ENCODE measurements at regions of chr16 and their contacts with region 1.

Region 1: GRCh38 chr16:1705688-1706385 is at the start of gene MAPK8IP3:
- DNase-seq: peak; percentile 94 to 97 (median 96)
- ATAC-seq: peak; percentile 84
- H3K4me3 ChIP-seq: peak within 1 kb of the TSS; percentile 74
- H3K27ac ChIP-seq: peak within 1 kb of the TSS; percentile 84
- H3K4me1 ChIP-seq: peaks cover 28 to 46% of the 10 kb centered on the region in 2 experiments
- H3K27me3 ChIP-seq: no peaks in the 10 kb centered on the region
- CTCF ChIP-seq: peak; percentile 74 to 95 (median 93)
- EP300 ChIP-seq: no peak
- POLR2A ChIP-seq: peak; percentile 94
- RAD21 ChIP-seq: no peak
- polyA plus RNA-seq, gene MAPK8IP3: 0.17 to 0.21 TPM

Region 2: GRCh38 chr16:1499756-1500464 is 205.9 kb before region 1 on chr16:
- CTCF ChIA-PET with region 1: no interaction called
- POLR2A ChIA-PET with region 1: no interaction called
- in situ Hi-C with region 1: no loop called
- intact Hi-C with region 1: no loop called
- DNase-seq: no peak
- ATAC-seq: no peak
- H3K4me3 ChIP-seq: no peak overlapping the region
- H3K27ac ChIP-seq: no peak overlapping the region
- H3K4me1 ChIP-seq: peaks cover 0 to 39% of the 10 kb centered on the region in 2 experiments; a peak in 2 of 5 replicates
- H3K27me3 ChIP-seq: no peaks in the 10 kb centered on the region
- CTCF ChIP-seq: no peak
- EP300 ChIP-seq: no peak
- POLR2A ChIP-seq: no peak
- RAD21 ChIP-seq: no peak

Region 3: DNA sequence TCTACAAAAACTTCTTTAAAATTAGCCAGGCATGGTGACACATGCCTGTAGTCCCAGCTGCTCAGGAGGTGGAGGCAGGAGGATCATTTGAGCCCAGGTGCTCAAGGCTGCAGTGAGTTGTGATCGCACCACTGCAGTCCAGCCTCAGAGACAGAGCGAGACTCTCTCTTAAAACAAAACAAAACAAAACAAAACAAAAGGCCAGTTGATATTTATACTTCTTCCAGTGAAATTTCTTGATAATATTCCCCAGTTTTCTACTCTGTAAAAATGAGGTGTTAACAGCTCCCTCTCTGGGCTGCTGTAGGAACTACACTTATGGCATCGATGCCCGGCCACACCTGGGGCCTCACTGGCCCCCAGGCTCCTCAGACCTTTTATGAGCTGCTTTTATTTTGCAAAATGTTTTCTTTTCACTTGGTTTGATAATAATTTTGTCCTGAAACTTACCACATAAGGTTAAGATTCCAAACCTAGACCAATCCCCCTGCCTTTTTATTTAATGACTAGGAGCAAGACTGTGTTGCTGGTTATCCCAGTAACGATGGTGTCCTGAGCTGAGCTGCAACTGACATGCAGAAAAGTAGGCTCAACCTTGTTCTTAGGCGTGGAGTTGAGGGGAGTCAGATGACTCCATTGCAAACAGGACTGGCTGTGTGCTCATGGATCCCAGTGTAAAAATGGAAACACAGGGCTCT is 17.8 kb after region 1 on chr16:
- CTCF ChIA-PET with region 1: no interaction called
- POLR2A ChIA-PET with region 1: interaction called, 11 read pairs
- in situ Hi-C with region 1: no loop called
- intact Hi-C with region 1: no loop called
- DNase-seq: peak; percentile 55 to 69 (median 64)
- ATAC-seq: peak; percentile 89
- H3K4me3 ChIP-seq: no peak overlapping the region
- H3K27ac ChIP-seq: no peak overlapping the region
- H3K4me1 ChIP-seq: peaks cover 9 to 26% of the 10 kb centered on the region in 2 experiments; a peak in 3 of 5 replicates
- H3K27me3 ChIP-seq: no peaks in the 10 kb centered on the region
- CTCF ChIP-seq: peak; percentile 61 to 80 (median 76)
- EP300 ChIP-seq: no peak
- POLR2A ChIP-seq: no peak
- RAD21 ChIP-seq: peak; percentile 23 to 56; a peak in 3 of 4 replicates

Region 4: DNA sequence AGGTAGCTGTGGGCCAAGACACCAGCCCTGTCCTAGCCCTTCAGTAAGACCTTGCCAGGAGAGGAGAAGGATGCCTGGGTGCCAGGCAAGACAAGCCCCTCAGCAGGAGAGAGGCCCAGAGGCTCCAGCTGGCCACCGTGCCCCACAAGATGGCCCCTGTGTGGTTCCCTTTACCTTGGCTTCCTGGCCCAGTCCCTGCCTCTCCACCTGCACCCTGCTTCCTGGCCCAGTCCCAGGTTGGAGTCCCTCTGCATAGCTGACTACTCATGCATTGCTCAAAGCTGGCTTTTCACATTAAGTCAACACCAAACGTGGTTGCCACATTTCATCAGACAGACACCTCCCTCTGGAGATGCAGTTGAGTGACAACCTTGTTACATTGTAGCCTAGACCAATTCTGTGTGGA is 287.9 kb after region 1 on chr16:
- CTCF ChIA-PET with region 1: no interaction called
- POLR2A ChIA-PET with region 1: no interaction called
- in situ Hi-C with region 1: no loop called
- intact Hi-C with region 1: no loop called
- DNase-seq: peak in 1 of 4 experiments; percentile 45
- ATAC-seq: peak; percentile 5
- H3K4me3 ChIP-seq: peak overlapping the region; percentile 64
- H3K27ac ChIP-seq: peak overlapping the region; percentile 94; the same call in 2 of the 3 replicates
- H3K4me1 ChIP-seq: peaks cover 29 to 59% of the 10 kb centered on the region in 2 experiments
- H3K27me3 ChIP-seq: no peaks in the 10 kb centered on the region
- CTCF ChIP-seq: no peak
- EP300 ChIP-seq: no peak
- POLR2A ChIP-seq: no peak
- RAD21 ChIP-seq: no peak